K562 (cell line): ENCODE measurements at regions of chr12 and their contacts with region 1.

Region 1: DNA sequence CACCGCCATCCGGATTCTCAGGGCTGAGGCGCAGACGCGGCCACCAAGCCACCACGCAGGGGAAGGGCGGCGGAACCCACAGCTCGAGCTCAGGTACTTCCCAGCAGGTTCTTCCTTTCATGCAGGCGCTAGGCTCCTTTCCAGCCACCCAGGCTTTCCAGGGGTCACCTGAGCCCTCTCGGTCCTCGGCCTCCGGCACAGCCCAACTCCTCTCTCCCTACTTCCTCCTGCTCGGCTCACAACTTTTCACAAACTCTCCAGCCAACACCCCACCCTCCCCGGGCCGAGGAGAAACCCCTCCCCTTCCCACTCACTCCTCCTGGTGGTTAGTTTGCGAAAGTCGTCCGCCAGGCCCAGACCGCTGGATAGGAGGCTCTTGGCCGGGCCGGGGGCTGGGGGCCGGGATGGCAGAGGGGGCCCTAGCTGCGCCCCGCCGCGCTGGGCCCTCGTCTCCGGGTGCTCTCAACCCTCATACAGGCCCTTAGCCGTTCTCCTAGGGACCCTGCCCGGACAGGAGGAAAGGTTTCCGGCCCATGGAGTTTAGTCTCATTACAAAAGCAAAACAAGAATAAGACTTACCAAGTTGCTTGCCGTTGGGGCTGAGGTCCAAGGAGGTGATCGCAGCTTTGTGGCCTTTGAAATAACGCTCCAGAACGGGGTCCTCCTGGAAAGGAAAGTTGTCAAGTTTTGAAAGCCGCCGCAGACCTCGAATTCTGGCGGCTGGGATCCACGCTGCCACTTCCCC is at the start of gene GALNT4:
- DNase-seq: peak; percentile 82 to 93 (median 88)
- ATAC-seq: peak; percentile 92
- H3K4me3 ChIP-seq: peak within 1 kb of the TSS; percentile 93
- H3K27ac ChIP-seq: peak within 1 kb of the TSS; percentile 99
- H3K4me1 ChIP-seq: peaks cover 10 to 23% of the 10 kb centered on the region in 2 experiments; a peak in 4 of 5 replicates
- H3K27me3 ChIP-seq: no peaks in the 10 kb centered on the region
- CTCF ChIP-seq: peak; percentile 61 to 81 (median 74)
- EP300 ChIP-seq: no peak
- POLR2A ChIP-seq: peak; percentile 66
- RAD21 ChIP-seq: peak; percentile 46 to 68
- polyA plus RNA-seq, gene GALNT4: 1.2 to 1.3 TPM

Region 2: GRCh38 chr12:88141770-88142609 is 1382.7 kb before region 1 on chr12 and contains the starts of genes CEP290 and TMTC3:
- CTCF ChIA-PET with region 1: no interaction called
- POLR2A ChIA-PET with region 1: no interaction called
- in situ Hi-C with region 1: no loop called
- intact Hi-C with region 1: loop called (anchors 10 kb)
- DNase-seq: peak; percentile 86 to 98 (median 86)
- ATAC-seq: peak; percentile 96
- H3K4me3 ChIP-seq: peak within 1 kb of the TSS; percentile 68
- H3K27ac ChIP-seq: peak within 1 kb of the TSS; percentile 68
- H3K4me1 ChIP-seq: peaks cover 0 to 7% of the 10 kb centered on the region in 2 experiments; a peak in 2 of 5 replicates
- H3K27me3 ChIP-seq: no peaks in the 10 kb centered on the region
- CTCF ChIP-seq: no peak
- EP300 ChIP-seq: no peak
- POLR2A ChIP-seq: peak; percentile 75
- RAD21 ChIP-seq: no peak
- polyA plus RNA-seq, gene CEP290: 7.2 to 10.7 TPM
- polyA plus RNA-seq, gene TMTC3: 4.6 to 4.7 TPM

Region 3: GRCh38 chr12:89019408-89020120 is 505.1 kb before region 1 on chr12:
- CTCF ChIA-PET with region 1: interaction called, 19 read pairs
- POLR2A ChIA-PET with region 1: no interaction called
- in situ Hi-C with region 1: loop called (anchors 10 kb)
- intact Hi-C with region 1: loop called (anchors 1 kb)
- DNase-seq: peak; percentile 26 to 76 (median 36)
- ATAC-seq: peak; percentile 97
- H3K4me3 ChIP-seq: no peak overlapping the region
- H3K27ac ChIP-seq: no peak overlapping the region
- H3K4me1 ChIP-seq: no peaks in the 10 kb centered on the region
- H3K27me3 ChIP-seq: no peaks in the 10 kb centered on the region
- CTCF ChIP-seq: peak; percentile 69 to 83 (median 82)
- EP300 ChIP-seq: no peak
- POLR2A ChIP-seq: no peak
- RAD21 ChIP-seq: peak; percentile 97

Region 4: DNA sequence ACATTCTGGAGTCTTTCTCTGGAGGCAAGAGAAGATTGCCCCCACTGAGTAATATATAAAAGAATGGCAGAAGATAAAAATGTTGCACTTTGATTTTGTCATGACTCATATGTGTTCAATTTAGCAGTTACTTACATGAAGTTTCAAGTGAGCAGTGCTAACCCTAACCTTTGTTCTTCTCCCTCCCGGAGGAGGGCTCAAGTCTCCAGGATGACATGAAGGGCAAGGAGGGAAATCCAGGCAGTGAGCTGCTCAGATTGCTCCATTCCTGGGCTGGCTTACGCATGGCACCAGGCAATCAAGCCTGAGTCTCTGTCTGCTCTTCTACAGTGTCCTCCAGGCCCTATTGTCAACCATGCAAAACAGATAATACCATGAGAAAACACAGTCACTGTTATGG is 494.8 kb before region 1 on chr12:
- CTCF ChIA-PET with region 1: no interaction called
- POLR2A ChIA-PET with region 1: no interaction called
- in situ Hi-C with region 1: loop called (anchors 5 kb)
- intact Hi-C with region 1: no loop called
- DNase-seq: no peak
- ATAC-seq: no peak
- H3K4me3 ChIP-seq: no peak overlapping the region
- H3K27ac ChIP-seq: no peak overlapping the region
- H3K4me1 ChIP-seq: no peaks in the 10 kb centered on the region
- H3K27me3 ChIP-seq: no peaks in the 10 kb centered on the region
- CTCF ChIP-seq: no peak
- EP300 ChIP-seq: no peak
- POLR2A ChIP-seq: no peak
- RAD21 ChIP-seq: no peak

Region 5: DNA sequence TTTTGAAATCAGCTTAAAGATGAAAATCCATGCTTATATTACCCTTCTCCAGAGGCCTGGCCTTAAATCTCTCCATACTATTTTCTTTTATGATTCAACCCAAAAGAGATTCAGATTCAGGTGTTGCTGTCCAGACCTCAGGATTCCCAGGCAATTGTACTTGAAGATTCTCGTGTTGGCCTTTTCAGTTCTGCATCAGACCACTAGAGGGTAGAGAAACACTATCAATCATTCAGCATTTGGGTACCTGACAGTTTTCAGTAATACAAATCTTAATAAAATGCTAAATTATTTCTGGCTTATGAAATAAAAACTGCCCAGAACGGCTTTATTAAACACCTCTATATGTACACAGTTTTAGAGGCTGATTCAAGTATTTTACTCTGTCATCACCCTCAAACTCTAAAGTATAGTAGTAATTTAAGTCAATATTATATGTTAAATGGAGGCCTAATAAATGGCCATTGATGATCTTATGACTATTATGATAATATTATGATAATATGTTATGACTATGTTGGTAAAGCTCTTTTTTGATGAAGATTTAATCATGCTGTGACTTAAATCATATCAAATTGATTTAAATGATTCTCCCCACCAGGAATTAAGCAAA is 473.5 kb before region 1 on chr12:
- CTCF ChIA-PET with region 1: no interaction called
- POLR2A ChIA-PET with region 1: no interaction called
- in situ Hi-C with region 1: no loop called
- intact Hi-C with region 1: loop called (anchors 10 kb)
- DNase-seq: peak; percentile 30 to 53 (median 50)
- ATAC-seq: peak; percentile 49; the same call in 1 of the 3 replicates
- H3K4me3 ChIP-seq: no peak overlapping the region
- H3K27ac ChIP-seq: no peak overlapping the region
- H3K4me1 ChIP-seq: no peaks in the 10 kb centered on the region
- H3K27me3 ChIP-seq: no peaks in the 10 kb centered on the region
- CTCF ChIP-seq: peak; percentile 37 to 58 (median 53); a peak in 5 of 6 replicates
- EP300 ChIP-seq: no peak
- POLR2A ChIP-seq: no peak
- RAD21 ChIP-seq: peak; percentile 95 to 96

Region 6: DNA sequence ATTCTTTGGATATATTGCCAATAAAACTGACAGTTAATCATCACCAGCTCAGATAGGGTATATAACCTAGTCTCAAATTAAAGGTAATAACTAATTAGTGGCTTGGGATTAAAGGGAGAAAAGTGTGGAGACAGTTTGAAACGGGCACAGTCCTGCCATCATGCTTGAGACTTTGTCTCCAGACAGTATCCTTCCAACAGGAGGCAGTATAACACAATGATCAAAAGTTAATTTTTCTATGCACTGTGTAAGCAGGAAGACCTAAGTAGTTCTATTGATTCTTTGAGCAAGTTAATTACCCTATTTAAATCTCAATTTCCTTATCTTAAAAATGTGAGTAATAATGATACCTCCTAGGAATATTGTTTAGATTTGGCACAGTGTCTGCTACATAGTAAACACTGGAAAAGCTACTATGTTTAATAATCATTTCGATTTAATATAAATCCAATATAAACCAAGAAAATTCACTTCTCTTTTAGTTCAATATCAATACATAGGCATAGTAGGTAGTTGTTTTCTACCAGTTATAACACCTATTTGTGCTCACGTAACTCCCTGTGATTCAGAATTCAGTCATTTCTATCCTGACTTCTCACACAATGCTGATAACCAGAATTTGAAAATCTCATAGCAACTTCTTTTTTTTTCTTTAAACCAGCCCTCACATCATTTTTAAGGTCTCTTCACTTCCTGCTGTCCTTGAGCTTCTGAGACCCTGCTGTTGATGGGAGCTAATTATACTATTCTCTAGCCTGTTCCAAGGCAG is 53.8 kb before region 1 on chr12:
- CTCF ChIA-PET with region 1: interaction called, 17 read pairs
- POLR2A ChIA-PET with region 1: interaction called, 3 read pairs
- in situ Hi-C with region 1: loop called (anchors 5 kb)
- intact Hi-C with region 1: loop called (anchors 1 kb)
- DNase-seq: peak; percentile 34 to 68 (median 41)
- ATAC-seq: peak; percentile 95
- H3K4me3 ChIP-seq: no peak overlapping the region
- H3K27ac ChIP-seq: no peak overlapping the region
- H3K4me1 ChIP-seq: no peaks in the 10 kb centered on the region; a peak in 1 of 5 replicates
- H3K27me3 ChIP-seq: no peaks in the 10 kb centered on the region
- CTCF ChIP-seq: peak; percentile 37 to 81 (median 63); a peak in 5 of 6 replicates
- EP300 ChIP-seq: no peak
- POLR2A ChIP-seq: no peak
- RAD21 ChIP-seq: peak; percentile 77 to 88

Region 7: DNA sequence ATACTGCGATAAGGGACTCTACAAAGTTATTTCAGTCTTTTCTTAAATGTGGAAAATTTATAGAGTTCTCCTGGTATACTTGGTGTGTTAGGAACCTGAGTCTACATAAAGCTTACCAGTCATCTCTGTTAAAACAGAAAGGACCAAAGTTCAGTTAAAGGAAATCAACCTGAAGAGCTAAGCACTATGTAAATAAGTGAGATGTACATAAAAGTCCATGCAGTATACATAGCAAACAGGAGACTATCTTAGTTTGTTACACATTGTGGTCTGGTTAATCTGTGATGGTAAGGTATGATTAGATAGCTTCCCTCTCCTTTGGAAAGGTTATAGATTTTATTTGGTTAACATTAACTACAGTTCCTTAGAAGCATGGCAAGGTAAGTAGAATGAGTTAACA is 108.1 kb after region 1 on chr12:
- CTCF ChIA-PET with region 1: no interaction called
- POLR2A ChIA-PET with region 1: no interaction called
- in situ Hi-C with region 1: no loop called
- intact Hi-C with region 1: no loop called
- DNase-seq: no peak
- ATAC-seq: no peak
- H3K4me3 ChIP-seq: no peak overlapping the region
- H3K27ac ChIP-seq: no peak overlapping the region
- H3K4me1 ChIP-seq: no peaks in the 10 kb centered on the region; a peak in 1 of 5 replicates
- H3K27me3 ChIP-seq: no peaks in the 10 kb centered on the region
- CTCF ChIP-seq: no peak
- EP300 ChIP-seq: no peak
- POLR2A ChIP-seq: no peak
- RAD21 ChIP-seq: no peak

Region 8: GRCh38 chr12:89709157-89709994 is 184.7 kb after region 1 on chr12:
- CTCF ChIA-PET with region 1: no interaction called
- POLR2A ChIA-PET with region 1: no interaction called
- in situ Hi-C with region 1: no loop called
- intact Hi-C with region 1: no loop called
- DNase-seq: peak; percentile 96 to 98 (median 98)
- ATAC-seq: peak; percentile 89
- H3K4me3 ChIP-seq: peak overlapping the region; percentile 75
- H3K27ac ChIP-seq: peak overlapping the region; percentile 94
- H3K4me1 ChIP-seq: peaks cover 12 to 26% of the 10 kb centered on the region in 2 experiments; a peak in 4 of 5 replicates
- H3K27me3 ChIP-seq: no peaks in the 10 kb centered on the region
- CTCF ChIP-seq: 0 out of 6 replicates have a peak, but pooled peaks of 1 of the 3 experiments have one; percentile 4
- EP300 ChIP-seq: peak; percentile 21; the same call in 1 of the 2 replicates
- POLR2A ChIP-seq: peak; percentile 70
- RAD21 ChIP-seq: no peak; a peak in 2 of 4 replicates

Region 9: DNA sequence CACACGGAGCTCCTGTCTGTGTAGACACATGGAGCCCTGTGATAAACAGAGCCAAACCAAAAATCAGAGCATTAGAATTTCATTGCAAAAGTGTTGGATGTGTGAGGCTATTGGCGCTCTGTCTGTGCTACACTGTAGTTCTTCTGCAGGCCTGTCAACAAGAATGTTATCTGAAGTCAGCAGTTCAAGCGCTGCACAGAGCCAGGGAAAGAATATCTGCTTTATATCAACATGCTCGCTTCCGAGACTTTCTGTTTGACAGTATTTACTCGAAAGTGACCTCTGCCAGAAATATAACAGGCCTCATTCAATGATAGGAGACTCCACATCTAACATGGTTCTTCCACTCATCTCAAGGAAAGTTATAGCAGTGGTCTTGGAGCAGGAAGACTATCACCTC is 1312.0 kb after region 1 on chr12:
- CTCF ChIA-PET with region 1: no interaction called
- POLR2A ChIA-PET with region 1: no interaction called
- in situ Hi-C with region 1: loop called (anchors 25 kb)
- intact Hi-C with region 1: no loop called
- DNase-seq: no peak
- ATAC-seq: no peak
- H3K4me3 ChIP-seq: no peak overlapping the region
- H3K27ac ChIP-seq: no peak overlapping the region
- H3K4me1 ChIP-seq: no peaks in the 10 kb centered on the region
- H3K27me3 ChIP-seq: no peaks in the 10 kb centered on the region
- CTCF ChIP-seq: no peak
- EP300 ChIP-seq: no peak
- POLR2A ChIP-seq: no peak
- RAD21 ChIP-seq: no peak